CD4-positive, alpha-beta memory T cell (primary cell): ENCODE measurements at regions of chr17 and their contacts with region 1.

Region 1: DNA sequence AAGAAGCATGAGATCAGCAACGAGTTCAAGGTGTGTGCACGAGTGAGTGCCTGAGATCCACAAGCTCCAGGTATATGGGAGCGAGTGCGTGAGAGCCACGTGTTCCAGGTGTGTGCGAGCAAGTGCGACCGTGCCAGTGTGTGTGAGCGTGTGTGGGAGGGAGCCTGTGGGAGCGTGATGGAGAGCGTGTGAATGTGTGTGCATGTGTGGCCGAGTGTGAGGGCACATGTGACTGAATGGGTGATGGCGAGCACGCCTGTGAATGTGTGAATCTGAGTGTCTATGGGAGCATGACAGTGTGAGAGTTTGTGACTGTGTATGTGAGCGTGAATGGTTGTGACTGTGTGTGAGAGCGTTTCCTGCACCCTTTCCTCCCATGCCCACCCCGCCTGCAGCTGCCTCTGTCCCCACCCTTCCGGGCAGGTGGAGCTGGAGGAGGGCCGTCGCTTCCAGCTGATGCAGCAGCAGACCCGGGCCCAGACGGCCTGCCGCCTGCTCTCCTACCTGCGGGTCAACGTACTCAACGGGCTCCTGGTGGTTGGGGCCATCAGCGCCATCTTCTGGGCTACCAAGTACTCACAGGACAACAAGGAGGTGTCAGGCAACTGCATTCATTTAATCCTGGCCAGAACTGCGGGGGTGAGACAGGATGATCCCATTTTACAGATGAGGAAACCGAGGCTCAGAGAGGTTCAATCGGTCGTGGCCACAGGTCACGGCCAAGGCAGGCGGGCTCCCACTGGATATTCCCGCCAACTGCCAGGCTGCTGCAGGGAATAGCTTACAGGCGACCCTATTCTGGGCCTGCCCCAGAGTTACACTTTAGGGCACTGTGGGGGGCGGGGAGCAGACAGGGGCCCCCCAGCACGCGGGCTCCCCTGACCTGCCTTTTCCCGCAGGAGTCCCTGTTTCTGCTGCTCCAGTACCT is 3.7 kb downstream of the TMC8 start:
- DNase-seq: peak; percentile 87 to 90 (median 89)
- H3K4me3 ChIP-seq: peak overlapping the region; percentile 93 to 97
- H3K4me3 Mint-ChIP-seq: peak overlapping the region; percentile 87 to 99 (median 88)
- H3K27ac ChIP-seq: peak overlapping the region; percentile 81
- H3K27ac Mint-ChIP-seq: peak overlapping the region; percentile 83 to 98 (median 93)
- H3K4me1 ChIP-seq: peaks cover 80% of the 10 kb centered on the region
- H3K4me1 Mint-ChIP-seq: peaks cover 34 to 87% (median 59%) of the 10 kb centered on the region in 4 donors
- H3K27me3 ChIP-seq: no peaks in the 10 kb centered on the region
- H3K27me3 Mint-ChIP-seq: no peaks in the 10 kb centered on the region

Region 2: GRCh38 chr17:78082988-78083387 is 51.2 kb before region 1 on chr17:
- CTCF ChIA-PET with region 1: interaction called, 23 read pairs
- POLR2A ChIA-PET with region 1: interaction called, 6 read pairs
- intact Hi-C with region 1: loop called (anchors 1 kb)
- DNase-seq: no peak
- H3K4me3 ChIP-seq: no peak overlapping the region
- H3K4me3 Mint-ChIP-seq: no peak overlapping the region
- H3K27ac ChIP-seq: no peak overlapping the region
- H3K27ac Mint-ChIP-seq: peak overlapping the region in 1 of 7 donors; percentile 69
- H3K4me1 ChIP-seq: no peaks in the 10 kb centered on the region
- H3K4me1 Mint-ChIP-seq: peaks cover 0 to 2% (median 0%) of the 10 kb centered on the region in 4 donors
- H3K27me3 ChIP-seq: no peaks in the 10 kb centered on the region
- H3K27me3 Mint-ChIP-seq: no peaks in the 10 kb centered on the region

Region 3: GRCh38 chr17:78112518-78113226 is 21.6 kb before region 1 on chr17:
- CTCF ChIA-PET with region 1: interaction called, 121 read pairs
- POLR2A ChIA-PET with region 1: interaction called, 1,172 read pairs
- intact Hi-C with region 1: loop called (anchors 1 kb)
- DNase-seq: peak; percentile 68 to 79 (median 72)
- H3K4me3 ChIP-seq: no peak overlapping the region
- H3K4me3 Mint-ChIP-seq: peak overlapping the region in 4 of 8 donors; percentile 43 to 59 (median 53)
- H3K27ac ChIP-seq: peak overlapping the region; percentile 35
- H3K27ac Mint-ChIP-seq: peak overlapping the region; percentile 81 to 96 (median 93)
- H3K4me1 ChIP-seq: peaks cover 47% of the 10 kb centered on the region
- H3K4me1 Mint-ChIP-seq: peaks cover 25 to 51% (median 36%) of the 10 kb centered on the region in 4 donors
- H3K27me3 ChIP-seq: no peaks in the 10 kb centered on the region
- H3K27me3 Mint-ChIP-seq: no peaks in the 10 kb centered on the region

Region 4: DNA sequence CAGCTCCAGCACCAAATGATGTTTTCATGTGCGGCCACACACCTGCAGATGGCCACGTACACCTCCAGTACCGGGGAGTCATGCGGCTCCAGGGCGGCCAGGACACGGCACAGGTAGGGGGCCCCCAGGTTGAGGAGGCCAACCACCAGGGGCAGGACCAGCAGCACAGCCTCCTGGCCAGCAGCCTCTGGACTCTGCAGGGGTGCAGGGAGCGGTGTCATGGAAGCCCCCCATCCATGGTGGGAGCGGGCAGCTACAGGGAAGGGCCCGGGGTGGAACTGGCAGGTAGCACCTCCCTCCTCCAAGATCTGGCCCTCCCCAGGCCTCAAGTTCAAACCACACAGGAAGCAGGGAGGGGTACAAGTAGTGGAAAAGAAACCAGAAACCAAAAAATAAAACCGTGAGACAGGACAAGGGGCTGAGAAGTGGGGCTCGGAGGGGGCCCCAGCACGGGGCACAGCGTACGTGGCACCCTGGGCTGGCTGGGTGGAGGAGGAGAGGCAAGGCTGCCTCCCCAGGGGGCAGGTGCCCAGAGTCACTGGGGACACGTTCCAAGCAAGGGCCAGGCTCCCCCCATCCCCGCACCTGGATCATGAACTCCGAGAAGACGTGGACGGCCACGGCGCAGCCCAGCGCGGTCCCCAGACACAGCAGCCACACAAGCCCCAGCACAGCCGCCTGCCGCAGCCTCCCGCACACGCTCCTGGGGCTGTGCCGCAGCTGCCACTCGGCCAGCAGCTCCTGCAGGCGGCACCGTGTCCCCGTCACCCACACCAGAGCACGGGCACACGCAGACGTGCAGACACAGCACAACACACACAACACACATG is 13.0 kb before region 1 on chr17:
- CTCF ChIA-PET with region 1: interaction called, 121 read pairs
- POLR2A ChIA-PET with region 1: interaction called, 1,172 read pairs
- intact Hi-C with region 1: loop called (anchors 1 kb)
- DNase-seq: peak; percentile 77 to 81 (median 78)
- H3K4me3 ChIP-seq: peak overlapping the region; percentile 22 to 69
- H3K4me3 Mint-ChIP-seq: peak overlapping the region; percentile 84 to 92 (median 89)
- H3K27ac ChIP-seq: peak overlapping the region; percentile 81
- H3K27ac Mint-ChIP-seq: peak overlapping the region; percentile 77 to 96 (median 91)
- H3K4me1 ChIP-seq: peaks cover 91% of the 10 kb centered on the region
- H3K4me1 Mint-ChIP-seq: peaks cover 26 to 69% (median 51%) of the 10 kb centered on the region in 4 donors
- H3K27me3 ChIP-seq: no peaks in the 10 kb centered on the region
- H3K27me3 Mint-ChIP-seq: no peaks in the 10 kb centered on the region